AG04449 (cell line): ENCODE measurements at regions of chr22 and their contacts with region 1.

Region 1: DNA sequence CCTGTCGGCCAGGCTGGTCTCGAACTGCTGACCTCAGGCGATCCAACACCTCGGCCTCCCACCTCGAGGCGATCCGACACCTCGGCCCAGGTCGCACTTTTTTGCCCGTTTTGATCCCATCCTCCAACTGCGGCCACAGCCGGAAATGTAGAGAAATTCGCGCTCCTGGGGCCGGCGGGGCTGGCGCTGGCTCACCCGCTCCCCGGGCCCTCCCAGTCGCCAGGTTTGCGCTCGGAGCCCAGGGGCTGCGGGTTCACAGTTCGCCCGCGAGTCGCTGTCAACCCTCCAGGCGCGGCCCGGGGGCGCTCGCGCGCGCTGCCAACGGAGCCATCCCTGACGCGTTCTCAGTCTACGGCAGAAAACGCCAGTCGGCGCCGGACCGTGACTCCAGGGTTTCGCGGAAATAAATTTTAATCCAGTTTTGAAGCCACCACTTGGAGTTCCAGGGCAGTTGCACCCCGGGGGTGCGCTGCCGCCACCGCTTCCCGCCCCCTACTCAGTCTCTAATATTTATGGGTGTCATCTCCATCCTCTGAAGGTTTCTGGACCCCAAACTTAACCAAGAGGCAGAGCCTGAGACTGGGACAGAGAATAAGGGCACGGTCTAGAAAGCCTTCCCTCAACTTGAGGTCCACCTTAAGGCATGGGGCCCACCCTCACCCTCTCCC is 1.5 kb upstream of the KLHDC7B start:
- DNase-seq: no peak
- H3K4me3 ChIP-seq: peak overlapping the region; percentile 27
- CTCF ChIP-seq: peak; percentile 77

Region 2: GRCh38 chr22:50556703-50557102 is 12.5 kb after region 1 on chr22:
- CTCF ChIA-PET with region 1: interaction called, 20 read pairs
- POLR2A ChIA-PET with region 1: no interaction called
- DNase-seq: no peak
- H3K4me3 ChIP-seq: no peak overlapping the region
- CTCF ChIP-seq: no peak